ENCODE measurements at regions of chr4 and their contacts with region 1.

Region 1: DNA sequence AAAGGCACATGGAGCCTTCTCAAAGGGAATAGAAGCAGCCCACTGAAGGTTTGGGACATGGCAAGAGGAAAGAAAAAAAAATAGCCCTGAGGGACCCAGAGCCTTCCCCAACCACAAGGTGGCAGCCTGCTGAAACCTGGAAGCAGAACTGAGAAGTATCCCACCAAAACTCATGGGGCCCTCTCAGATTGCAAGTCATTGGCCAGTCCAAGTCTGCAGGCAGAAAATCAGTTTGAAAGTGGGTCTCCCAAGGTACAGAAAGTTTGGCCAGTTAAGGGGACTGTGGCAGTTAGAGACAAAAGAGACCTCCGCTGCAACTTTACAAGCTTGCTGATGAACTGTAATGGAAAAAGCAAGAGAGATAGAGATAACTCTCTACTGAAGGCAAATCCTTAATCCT is 155.8 kb downstream of the ANTXR2 start:
- DNase-seq: peak; percentile 17
- CTCF ChIP-seq: peak; percentile 70

Region 2: GRCh38 chr4:79552311-79552710 is 364.9 kb before region 1 on chr4:
- in situ Hi-C with region 1: no loop called
- DNase-seq: no peak
- CTCF ChIP-seq: no peak

Region 3: DNA sequence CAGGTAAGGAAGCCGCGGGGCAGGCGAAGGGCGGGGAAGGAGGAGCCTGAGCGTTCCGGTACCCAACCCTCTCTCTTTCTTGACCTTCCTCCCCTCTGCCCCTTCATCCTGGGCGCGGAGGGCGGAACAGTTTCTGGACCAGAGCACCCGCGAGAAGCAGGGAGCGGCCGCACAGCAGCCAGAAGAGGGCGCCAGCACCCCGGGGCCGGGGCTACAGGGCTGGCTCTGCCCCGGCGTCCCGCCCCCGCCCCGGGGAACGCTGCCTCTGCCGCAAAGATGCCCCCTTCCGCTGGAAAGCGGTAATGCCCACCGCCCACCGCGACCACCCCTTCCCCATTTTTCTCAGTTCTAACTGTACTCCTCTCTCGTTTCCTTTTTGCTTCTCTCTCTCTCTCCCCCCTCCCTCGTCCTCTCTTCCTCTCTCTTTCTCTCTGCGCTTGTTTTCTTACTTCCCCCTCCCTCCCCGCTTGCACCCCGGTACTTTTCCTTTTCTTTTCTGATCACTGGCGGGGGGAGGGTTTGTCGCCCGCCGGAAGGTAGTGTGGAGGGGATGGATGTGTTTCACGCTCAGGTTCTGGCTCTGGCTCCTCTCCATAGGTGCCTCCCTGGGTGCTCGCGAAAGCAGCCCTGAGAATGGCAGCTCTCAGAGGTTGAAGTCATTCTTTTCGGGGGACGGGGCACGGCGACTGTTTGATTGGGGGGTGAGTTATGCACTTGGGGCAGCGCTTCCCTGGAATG is 267.0 kb after region 1 on chr4:
- in situ Hi-C with region 1: loop called (anchors 25 kb)
- DNase-seq: peak; percentile 91
- CTCF ChIP-seq: peak; percentile 91

Measured in GM13977 (cell line).